ENCODE measurements at regions of chr3 and their contacts with region 1.

Region 1: GRCh38 chr3:33074217-33075067 is 22.5 kb downstream of the GLB1 start:
- DNase-seq: peak; percentile 73 to 84
- H3K4me3 ChIP-seq: no peak overlapping the region
- H3K4me1 ChIP-seq: peaks cover 9% of the 10 kb centered on the region
- H3K27me3 ChIP-seq: no peaks in the 10 kb centered on the region

Region 2: DNA sequence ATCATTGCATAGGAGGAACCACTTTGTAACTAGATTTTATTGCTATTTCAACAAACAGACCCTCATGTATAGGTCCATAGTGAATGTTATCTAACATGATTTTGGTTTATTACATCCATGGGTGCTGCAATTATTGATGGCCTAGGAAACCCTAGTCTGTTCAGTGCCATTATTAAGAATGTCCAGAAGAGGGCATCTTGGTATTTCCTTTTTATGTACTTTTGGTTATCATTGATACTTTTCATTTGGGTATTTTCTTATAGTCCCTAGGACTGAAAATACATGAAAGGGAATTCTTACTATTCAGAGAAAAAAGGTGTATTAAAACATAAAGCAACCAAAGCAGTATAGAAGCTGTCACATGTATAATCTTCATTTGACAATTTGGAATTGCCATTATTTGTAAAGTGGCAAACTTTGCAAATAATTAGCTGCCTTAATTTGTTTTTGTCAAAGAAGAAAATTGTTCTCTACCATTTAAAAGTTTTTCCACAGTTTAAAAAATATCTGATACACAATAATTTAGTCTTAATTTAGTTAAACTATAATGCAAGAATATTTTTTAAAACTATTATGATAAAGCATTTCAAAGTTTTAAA is 340.7 kb before region 1 on chr3:
- in situ Hi-C with region 1: loop called (anchors 25 kb)
- DNase-seq: peak in 1 of 2 experiments; percentile 64
- H3K4me3 ChIP-seq: no peak overlapping the region
- H3K4me1 ChIP-seq: no peaks in the 10 kb centered on the region
- H3K27me3 ChIP-seq: no peaks in the 10 kb centered on the region

Region 3: DNA sequence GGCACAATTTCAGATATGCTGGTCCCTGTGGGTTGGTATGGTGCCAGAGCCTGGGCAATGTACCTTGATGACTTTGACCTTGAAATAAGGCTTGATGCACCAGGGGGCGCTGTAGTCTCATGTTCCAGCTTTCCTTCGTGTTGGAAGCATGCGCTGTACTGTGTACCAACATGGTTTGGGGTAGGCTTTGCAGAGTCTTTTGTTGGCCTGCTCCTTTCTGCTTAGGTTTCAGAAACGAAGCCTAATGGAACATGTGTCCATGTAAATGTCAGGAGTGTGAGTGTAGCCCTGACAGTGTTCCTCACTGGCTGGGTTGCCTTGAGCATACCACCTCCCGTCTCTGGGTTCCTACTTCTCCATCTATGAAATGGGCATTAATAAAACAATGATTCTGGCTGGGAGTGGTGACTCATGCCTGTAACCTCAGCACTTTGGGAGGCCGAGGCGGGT is 126.6 kb before region 1 on chr3:
- in situ Hi-C with region 1: loop called (anchors 5 kb)
- DNase-seq: peak; percentile 74 to 95
- H3K4me3 ChIP-seq: no peak overlapping the region
- H3K4me1 ChIP-seq: no peaks in the 10 kb centered on the region
- H3K27me3 ChIP-seq: no peaks in the 10 kb centered on the region